Breast epithelium (tissue), 4 donors: ENCODE measurements at regions of chr15 and their contacts with region 1.

Region 1: DNA sequence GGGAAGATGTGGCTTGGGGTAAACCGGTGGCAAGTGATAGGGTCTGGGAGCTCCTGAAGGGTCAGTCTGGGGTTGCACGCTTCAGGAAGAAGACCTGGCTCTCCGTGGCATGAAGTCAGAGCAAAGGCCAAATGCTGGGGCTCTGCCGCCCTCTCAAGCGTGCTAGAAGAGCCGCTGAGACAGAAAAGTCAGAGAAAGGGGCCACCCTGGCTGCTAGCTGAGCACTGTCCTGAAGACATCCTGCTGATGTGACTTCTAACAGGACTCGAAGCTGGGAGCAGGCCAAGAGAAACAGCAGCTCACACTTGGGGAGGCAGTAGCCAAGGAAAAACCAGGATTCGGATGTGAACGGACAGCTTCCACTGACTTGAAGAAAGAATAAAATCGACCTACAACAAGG is 270.4 kb downstream of the OCA2 start:
- DNase-seq: no peak
- H3K4me3 ChIP-seq: no peak overlapping the region
- H3K27ac ChIP-seq: no peak overlapping the region
- H3K4me1 ChIP-seq: no peaks in the 10 kb centered on the region
- H3K27me3 ChIP-seq: no peaks in the 10 kb centered on the region
- CTCF ChIP-seq: no peak
- POLR2A ChIP-seq: no peak

Region 2: GRCh38 chr15:27865323-27865922 is 36.7 kb after region 1 on chr15:
- intact Hi-C with region 1: loop called (anchors 1 kb)
- DNase-seq: no peak
- H3K4me3 ChIP-seq: no peak overlapping the region
- H3K27ac ChIP-seq: no peak overlapping the region
- H3K4me1 ChIP-seq: no peaks in the 10 kb centered on the region
- H3K27me3 ChIP-seq: no peaks in the 10 kb centered on the region
- CTCF ChIP-seq: no peak
- POLR2A ChIP-seq: no peak

Region 3: DNA sequence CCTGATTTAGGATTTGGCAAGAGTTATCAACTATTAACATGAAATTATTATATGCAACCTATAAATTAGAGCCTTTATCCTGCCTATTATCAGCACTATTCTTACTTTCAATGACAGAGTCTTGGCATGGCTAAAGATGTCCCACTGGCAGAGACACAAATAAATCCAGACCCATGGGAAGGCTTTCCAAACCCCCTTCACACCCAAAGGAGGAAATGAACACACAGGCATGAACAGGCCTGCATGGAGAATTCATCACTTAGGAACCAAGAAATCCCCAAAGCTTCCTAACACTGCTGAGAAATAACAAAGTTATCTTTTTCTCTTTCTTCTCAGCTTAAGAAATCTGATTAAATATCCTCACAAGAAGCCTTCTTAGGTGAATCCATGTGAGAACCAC is 56.5 kb after region 1 on chr15:
- intact Hi-C with region 1: no loop called
- DNase-seq: no peak
- H3K4me3 ChIP-seq: no peak overlapping the region
- H3K27ac ChIP-seq: no peak overlapping the region
- H3K4me1 ChIP-seq: no peaks in the 10 kb centered on the region
- H3K27me3 ChIP-seq: no peaks in the 10 kb centered on the region
- CTCF ChIP-seq: no peak
- POLR2A ChIP-seq: no peak